Psoas muscle (tissue), 8 donors: ENCODE measurements at regions of chr14 and their contacts with region 1.

Region 1: DNA sequence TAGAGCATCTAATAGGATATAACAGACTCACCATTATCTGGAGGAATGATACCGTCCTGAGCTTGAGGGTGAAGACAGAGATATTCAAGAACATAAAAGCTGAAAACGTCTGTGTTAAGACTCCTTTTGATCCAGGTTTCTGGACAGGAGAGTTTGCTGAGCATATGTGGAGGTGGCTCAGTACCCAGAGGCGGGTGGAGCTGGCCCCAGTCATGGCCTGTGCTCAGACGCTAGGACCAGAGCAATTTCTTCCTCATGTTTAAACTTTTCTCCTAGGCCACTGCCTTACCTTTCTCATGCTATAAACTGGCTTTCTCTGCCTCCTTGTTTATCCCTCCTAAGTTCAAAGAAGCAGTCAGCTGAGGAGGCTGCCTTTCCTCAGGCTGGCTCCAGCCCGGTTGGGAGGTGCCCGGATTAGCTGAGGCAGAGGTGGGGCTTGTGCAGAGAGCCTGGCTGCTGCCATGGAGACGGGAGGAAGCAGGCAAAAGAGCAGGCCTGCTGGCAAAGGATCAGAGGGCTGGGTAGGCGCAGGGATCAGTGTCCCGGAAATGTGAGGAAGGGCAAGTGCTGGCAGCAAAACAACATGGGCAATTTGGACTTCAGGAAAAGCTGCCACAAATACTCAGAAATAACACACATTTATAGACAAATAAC is 13.7 kb downstream of the COA8 start:
- DNase-seq: peak; percentile 87 to 88
- ATAC-seq: peak; percentile 73 to 83 (median 81)
- H3K4me3 ChIP-seq: no peak overlapping the region
- H3K27ac ChIP-seq: peak overlapping the region; percentile 3
- H3K4me1 ChIP-seq: peaks cover 9% of the 10 kb centered on the region
- H3K27me3 ChIP-seq: no peaks in the 10 kb centered on the region
- CTCF ChIP-seq: no peak

Region 2: GRCh38 chr14:103385152-103385993 is 191.1 kb before region 1 on chr14 and contains the start of gene MARK3:
- intact Hi-C with region 1: no loop called
- DNase-seq: peak; percentile 99
- ATAC-seq: peak; percentile 94 to 98 (median 96)
- H3K4me3 ChIP-seq: peak within 1 kb of the TSS; percentile 98
- H3K27ac ChIP-seq: peak within 1 kb of the TSS; percentile 99
- H3K4me1 ChIP-seq: peaks cover 20% of the 10 kb centered on the region
- H3K27me3 ChIP-seq: no peaks in the 10 kb centered on the region
- CTCF ChIP-seq: peak; percentile 30
- total RNA-seq, gene MARK3: 56.0 to 75.9 (median 66.7) TPM

Region 3: GRCh38 chr14:103749860-103750259 is 173.4 kb after region 1 on chr14:
- intact Hi-C with region 1: loop called in 1 of 2 experiments (anchors 2 kb)
- DNase-seq: no peak
- ATAC-seq: peak in 2 of 4 donors; percentile 50 to 52
- H3K4me3 ChIP-seq: no peak overlapping the region
- H3K27ac ChIP-seq: no peak overlapping the region
- H3K4me1 ChIP-seq: no peaks in the 10 kb centered on the region
- H3K27me3 ChIP-seq: no peaks in the 10 kb centered on the region
- CTCF ChIP-seq: peak; percentile 37

Region 4: DNA sequence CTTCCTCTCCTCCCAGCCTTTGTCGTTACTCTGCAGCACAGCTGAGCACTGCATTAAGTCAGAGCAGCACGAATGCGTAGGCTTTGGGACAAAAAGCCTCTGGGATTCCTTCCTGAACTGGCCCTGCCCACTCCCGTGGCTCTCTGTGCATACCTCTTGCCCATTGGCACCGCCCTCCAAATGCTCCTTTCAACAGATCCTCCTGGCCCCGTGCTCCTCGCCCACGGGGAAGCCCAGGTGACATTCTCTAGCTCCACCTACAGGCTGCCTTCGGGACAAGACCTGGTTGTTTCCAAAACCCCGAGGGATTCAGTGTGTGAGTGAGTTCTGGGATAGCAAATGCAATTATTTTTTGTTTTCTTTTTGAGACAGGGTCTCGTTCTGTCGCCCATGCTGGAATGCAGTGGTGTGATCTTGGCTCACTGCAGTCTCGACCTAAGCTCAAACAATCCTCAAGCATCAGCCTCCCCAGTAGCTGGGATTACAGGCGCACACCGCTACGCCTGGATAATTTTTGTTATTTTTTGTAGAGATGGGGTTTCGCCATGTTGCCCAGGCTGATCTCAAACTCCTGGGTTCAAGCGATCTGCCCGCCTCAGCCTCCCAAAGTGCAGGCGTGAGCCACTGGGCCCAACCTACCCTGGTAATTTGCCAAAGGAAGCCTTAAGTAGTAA is 333.9 kb after region 1 on chr14:
- intact Hi-C with region 1: loop called in 1 of 2 experiments (anchors 10 kb)
- DNase-seq: peak; percentile 71 to 81
- ATAC-seq: peak; percentile 93 to 95 (median 94)
- H3K4me3 ChIP-seq: no peak overlapping the region
- H3K27ac ChIP-seq: no peak overlapping the region
- H3K4me1 ChIP-seq: no peaks in the 10 kb centered on the region
- H3K27me3 ChIP-seq: no peaks in the 10 kb centered on the region
- CTCF ChIP-seq: peak; percentile 76

Region 5: DNA sequence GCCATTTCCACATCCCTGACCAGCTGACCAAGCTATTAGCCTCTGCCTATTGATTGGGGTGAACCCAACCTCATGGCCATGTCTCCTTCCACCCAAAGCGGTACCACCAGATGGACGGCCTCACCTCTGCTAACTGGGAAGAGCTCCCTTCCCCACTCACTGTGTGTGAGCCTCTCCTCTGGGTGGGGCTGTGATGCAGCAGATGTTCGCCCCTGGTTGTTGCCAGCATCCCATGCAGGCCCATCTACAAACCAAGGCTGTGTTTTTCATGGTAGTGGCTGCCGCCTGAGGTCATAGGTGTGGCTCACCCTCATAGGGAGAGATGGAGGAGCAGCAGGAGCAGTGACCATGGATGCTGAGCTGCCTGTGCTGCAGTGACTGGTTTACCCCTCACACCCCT is 413.5 kb after region 1 on chr14:
- intact Hi-C with region 1: loop called in 1 of 2 experiments (anchors 10 kb)
- DNase-seq: no peak
- ATAC-seq: no peak
- H3K4me3 ChIP-seq: no peak overlapping the region
- H3K27ac ChIP-seq: no peak overlapping the region
- H3K4me1 ChIP-seq: no peaks in the 10 kb centered on the region
- H3K27me3 ChIP-seq: peaks cover 0 to 11% (median 0%) of the 10 kb centered on the region in 3 donors
- CTCF ChIP-seq: no peak